Activated CD4-positive, alpha-beta memory T cell treated with anti-CD3 and anti-CD28 coated beads, Interleukin-2, amount 10 ng/mL, durations not matched to agents 7 days and 5 days (primary cell): ENCODE measurements at regions of chr6 and their contacts with region 1.

Region 1: DNA sequence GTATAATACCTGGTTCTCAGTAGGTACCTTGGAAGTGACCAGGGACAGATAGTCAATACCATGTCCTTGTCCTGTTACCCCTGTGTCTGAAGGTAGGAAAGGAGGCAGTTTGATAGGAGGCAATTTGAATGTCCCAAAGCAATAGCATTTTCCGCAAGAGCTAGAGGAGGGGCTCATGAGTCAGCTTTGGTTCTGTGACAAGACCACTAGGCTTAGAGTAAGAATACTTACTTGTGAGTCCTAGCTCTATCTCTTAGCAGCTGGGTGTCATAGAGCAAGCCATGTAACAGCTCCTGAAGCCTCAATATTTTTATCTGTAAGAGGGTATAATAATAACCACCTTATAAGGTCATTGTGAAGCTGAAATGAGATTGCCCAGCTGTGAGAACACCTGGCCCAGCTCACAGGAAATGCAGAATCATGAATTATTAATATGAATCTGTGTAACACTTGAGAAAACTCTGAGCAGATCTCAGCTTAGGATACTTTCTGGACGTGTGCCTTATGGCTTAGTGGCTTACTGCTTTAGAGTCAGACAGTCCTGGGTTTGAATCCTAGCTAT is 58.6 kb downstream of the DAAM2 start:
- DNase-seq: no peak
- H3K4me3 Mint-ChIP-seq: no peak overlapping the region
- H3K27ac Mint-ChIP-seq: no peak overlapping the region
- H3K4me1 Mint-ChIP-seq: no peaks in the 10 kb centered on the region
- H3K27me3 Mint-ChIP-seq: no peaks in the 10 kb centered on the region

Region 2: DNA sequence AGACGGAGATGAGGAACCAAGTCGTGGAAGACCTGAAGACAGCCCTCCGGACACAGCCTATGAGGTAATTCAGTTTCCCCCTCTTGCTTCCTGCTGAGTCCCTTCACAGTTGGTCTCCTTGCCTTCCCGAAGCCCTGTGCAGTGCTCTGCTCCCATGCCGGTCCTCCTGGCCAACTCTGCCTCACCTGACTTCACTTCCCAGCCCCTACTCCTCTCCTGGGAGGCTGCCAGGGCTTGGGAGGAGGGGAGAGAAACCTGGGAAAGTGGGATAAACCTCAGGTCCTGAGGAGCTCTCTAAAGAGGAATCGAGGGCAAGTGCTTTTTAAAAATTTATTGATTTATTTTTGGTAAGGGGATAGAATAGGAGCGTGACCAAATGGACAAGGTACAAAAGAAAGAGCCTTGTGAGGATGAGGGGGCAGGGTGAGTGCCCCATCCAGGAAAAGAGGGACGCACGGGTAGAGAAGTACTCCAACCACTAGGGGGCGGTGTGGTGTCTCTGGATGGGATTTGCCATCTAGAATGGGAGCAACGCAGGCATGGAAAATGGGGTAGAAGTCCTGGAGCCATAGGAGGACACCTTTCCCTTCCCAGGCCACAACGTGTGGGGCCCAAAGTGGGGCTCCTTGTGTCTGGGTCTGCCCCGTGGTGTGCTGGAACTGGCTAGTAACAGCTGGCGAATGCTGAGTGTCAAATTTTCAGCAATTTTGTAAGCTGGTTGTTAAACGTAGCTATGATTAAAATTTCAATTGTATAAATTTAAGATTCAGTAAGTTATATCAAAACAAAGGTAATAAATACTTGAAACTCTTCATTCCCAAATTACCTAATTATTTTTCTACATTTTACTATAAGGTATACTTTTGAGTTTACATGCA is 14.4 kb after region 1 on chr6:
- CTCF ChIA-PET with region 1: interaction called, 11 read pairs
- POLR2A ChIA-PET with region 1: no interaction called
- DNase-seq: peak; percentile 58
- H3K4me3 Mint-ChIP-seq: no peak overlapping the region
- H3K27ac Mint-ChIP-seq: no peak overlapping the region
- H3K4me1 Mint-ChIP-seq: no peaks in the 10 kb centered on the region
- H3K27me3 Mint-ChIP-seq: no peaks in the 10 kb centered on the region